GM10248 (cell line): ENCODE measurements at regions of chr11 and their contacts with region 1.

Region 1: GRCh38 chr11:2151500-2152257 is 9.3 kb downstream of the INS start:
- DNase-seq: peak; percentile 84
- CTCF ChIP-seq: peak; percentile 88

Region 2: DNA sequence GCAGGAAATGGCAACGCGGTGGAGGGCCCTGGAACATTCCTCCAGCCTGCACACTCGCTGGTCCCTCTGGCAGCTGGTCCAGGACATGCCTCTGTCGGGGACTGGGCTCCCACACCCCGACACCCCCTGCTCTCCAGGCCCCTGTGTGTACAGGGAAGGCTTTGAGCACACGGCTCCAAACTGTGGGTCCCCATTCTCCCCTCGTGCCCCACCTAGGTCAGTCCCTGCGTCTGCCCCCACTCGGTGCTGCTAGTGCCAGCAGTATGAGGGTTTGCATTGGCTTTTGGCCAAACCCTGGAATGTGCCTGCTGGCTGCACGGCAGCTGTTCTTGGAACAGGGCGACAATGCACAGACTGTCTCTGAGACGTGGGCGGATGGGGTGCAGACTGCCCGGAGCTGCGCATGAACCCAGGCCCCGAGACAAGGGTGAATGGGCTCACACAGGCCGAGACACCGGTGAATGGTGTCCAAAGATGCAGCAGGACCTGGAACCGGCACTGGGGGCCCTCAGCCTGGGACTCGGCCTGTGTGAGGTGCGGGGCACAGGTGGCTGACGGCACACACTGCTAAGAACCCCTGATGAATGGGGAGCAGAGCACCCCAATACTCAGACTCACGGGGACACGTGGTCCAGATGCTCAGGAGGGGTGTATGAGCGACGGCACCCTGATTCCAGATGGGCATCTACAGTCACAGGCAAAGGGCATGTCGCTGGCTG is 324.4 kb before region 1 on chr11:
- CTCF ChIA-PET with region 1: interaction called, 112 read pairs
- POLR2A ChIA-PET with region 1: no interaction called
- DNase-seq: no peak
- CTCF ChIP-seq: no peak

Region 3: DNA sequence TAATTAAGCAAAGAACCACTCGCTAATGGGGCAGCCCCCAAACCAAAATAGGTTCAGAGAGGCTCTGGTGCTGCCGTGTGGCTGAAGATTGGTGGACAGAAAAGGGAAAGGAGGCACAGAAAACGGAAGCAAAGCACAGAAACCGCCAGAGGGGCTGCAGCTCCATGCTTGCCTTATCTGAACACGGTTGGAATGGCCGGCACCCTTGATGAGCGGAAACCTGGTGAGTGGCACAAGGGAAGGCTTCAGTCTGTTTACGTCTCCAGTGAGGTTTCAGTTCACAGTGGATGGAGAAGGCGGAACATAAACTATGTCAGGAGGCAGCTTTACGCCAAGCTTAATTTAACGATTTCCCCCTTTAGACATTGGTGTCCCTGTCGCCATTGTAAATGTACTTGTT is 254.8 kb before region 1 on chr11:
- CTCF ChIA-PET with region 1: interaction called, 13 read pairs
- POLR2A ChIA-PET with region 1: no interaction called
- DNase-seq: peak; percentile 66
- CTCF ChIP-seq: peak; percentile 37

Region 4: GRCh38 chr11:2036863-2037486 is 114.7 kb before region 1 on chr11:
- CTCF ChIA-PET with region 1: interaction called, 561 read pairs
- POLR2A ChIA-PET with region 1: interaction called, 3 read pairs
- DNase-seq: no peak
- CTCF ChIP-seq: no peak

Region 5: GRCh38 chr11:2123116-2123960 is 28.3 kb before region 1 on chr11:
- CTCF ChIA-PET with region 1: interaction called, 11 read pairs
- POLR2A ChIA-PET with region 1: no interaction called
- DNase-seq: no peak
- CTCF ChIP-seq: peak; percentile 10

Region 6: GRCh38 chr11:2298795-2299761 is 147.4 kb after region 1 on chr11:
- CTCF ChIA-PET with region 1: no interaction called
- POLR2A ChIA-PET with region 1: no interaction called
- DNase-seq: no peak
- CTCF ChIP-seq: peak; percentile 15